ENCODE measurements at regions of chr19 and their contacts with region 1.

Region 1: GRCh38 chr19:6737284-6738046 is at the start of gene GPR108:
- DNase-seq: peak; percentile 100
- ATAC-seq: peak; percentile 73
- H3K4me3 Mint-ChIP-seq: peak within 1 kb of the TSS; percentile 97
- H3K27ac Mint-ChIP-seq: peak within 1 kb of the TSS; percentile 97
- H3K4me1 Mint-ChIP-seq: peaks cover 45% of the 10 kb centered on the region
- H3K27me3 Mint-ChIP-seq: no peaks in the 10 kb centered on the region
- CTCF ChIP-seq: no peak
- total RNA-seq, gene GPR108: 48.7 to 59.5 TPM (median 54.2 TPM) in 3 replicates

Region 2: DNA sequence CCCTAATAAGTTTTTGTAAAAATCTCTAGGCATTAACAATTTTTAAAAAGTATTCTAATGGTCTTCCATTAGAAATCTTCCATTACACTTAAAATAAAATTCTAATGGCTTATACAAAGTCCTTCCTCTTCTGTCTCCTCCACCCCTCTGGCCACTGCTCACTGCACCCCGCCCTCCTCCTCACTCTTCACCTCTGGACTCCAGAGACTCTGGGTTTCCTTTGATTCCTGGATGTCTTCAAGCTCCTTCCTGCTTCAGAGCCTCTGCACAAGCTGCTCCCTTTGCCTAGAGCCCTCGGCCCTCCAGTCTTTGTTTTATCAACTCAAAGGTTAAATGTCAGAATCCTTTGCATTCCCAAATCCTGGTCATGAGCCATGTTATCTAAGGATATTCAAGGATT is 88.3 kb before region 1 on chr19:
- CTCF ChIA-PET with region 1: no interaction called
- POLR2A ChIA-PET with region 1: no interaction called
- DNase-seq: no peak
- ATAC-seq: no peak
- H3K4me3 Mint-ChIP-seq: no peak overlapping the region
- H3K27ac Mint-ChIP-seq: no peak overlapping the region
- H3K4me1 Mint-ChIP-seq: no peaks in the 10 kb centered on the region
- H3K27me3 Mint-ChIP-seq: peaks cover 9% of the 10 kb centered on the region
- CTCF ChIP-seq: no peak

Region 3: GRCh38 chr19:6723738-6724137 is 13.7 kb before region 1 on chr19:
- CTCF ChIA-PET with region 1: interaction called, 10 read pairs
- POLR2A ChIA-PET with region 1: interaction called, 3 read pairs
- DNase-seq: no peak
- ATAC-seq: no peak
- H3K4me3 Mint-ChIP-seq: no peak overlapping the region
- H3K27ac Mint-ChIP-seq: no peak overlapping the region
- H3K4me1 Mint-ChIP-seq: peaks cover 10% of the 10 kb centered on the region
- H3K27me3 Mint-ChIP-seq: no peaks in the 10 kb centered on the region
- CTCF ChIP-seq: no peak

Region 4: DNA sequence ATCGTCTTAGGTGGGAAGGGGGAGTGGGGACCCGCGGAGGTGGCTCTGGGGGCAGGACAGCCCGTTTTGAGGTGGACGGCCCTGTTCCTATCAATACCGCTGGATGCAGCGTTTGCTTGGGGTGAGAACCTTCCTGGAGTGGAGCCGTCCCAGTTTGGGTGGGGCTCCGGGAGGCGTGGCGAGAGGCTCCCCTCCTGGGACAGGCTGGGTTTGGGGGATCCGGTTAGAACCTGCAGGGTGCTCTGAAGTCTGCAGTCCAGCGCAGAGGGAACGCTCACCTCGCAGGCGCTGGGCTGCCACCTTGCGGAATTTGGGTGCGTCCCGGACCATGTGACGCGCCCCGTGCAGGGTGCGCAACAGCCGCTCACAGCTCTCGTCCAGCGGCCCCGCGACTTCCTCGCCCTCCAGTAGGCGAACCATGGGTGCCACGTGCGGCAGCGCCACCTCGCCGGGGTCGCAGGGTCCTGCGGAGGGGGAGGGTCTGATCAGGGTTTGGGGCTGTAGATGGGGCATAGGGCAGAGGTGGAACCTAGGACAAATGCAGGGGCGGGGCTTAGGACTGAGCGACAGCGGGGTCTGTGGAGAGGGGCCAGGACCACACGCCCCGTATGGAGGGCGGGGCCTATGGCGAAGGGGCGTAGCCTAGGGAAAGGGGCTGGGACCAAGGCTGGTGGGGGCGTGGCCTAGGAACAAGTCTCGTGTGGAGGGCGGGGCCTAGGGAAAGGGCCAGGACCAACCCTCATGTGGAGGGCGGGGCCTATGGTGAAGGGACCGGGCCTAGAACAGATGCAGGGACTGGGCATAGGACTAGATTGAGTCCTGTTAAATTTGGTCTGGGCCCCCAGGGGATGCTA is 15.9 kb after region 1 on chr19:
- CTCF ChIA-PET with region 1: interaction called, 31 read pairs
- POLR2A ChIA-PET with region 1: interaction called, 29 read pairs
- DNase-seq: peak; percentile 99
- ATAC-seq: peak; percentile 93
- H3K4me3 Mint-ChIP-seq: peak overlapping the region; percentile 80
- H3K27ac Mint-ChIP-seq: peak overlapping the region; percentile 98
- H3K4me1 Mint-ChIP-seq: peaks cover 5% of the 10 kb centered on the region; the same call in 1 of the 2 replicates
- H3K27me3 Mint-ChIP-seq: no peaks in the 10 kb centered on the region
- CTCF ChIP-seq: no peak

Region 5: GRCh38 chr19:6767357-6768235 is 30.1 kb after region 1 on chr19 and contains the start of gene SH2D3A:
- CTCF ChIA-PET with region 1: interaction called, 36 read pairs
- POLR2A ChIA-PET with region 1: interaction called, 19 read pairs
- DNase-seq: peak; percentile 97
- ATAC-seq: peak; percentile 83
- H3K4me3 Mint-ChIP-seq: peak within 1 kb of the TSS; percentile 89
- H3K27ac Mint-ChIP-seq: peak within 1 kb of the TSS; percentile 100
- H3K4me1 Mint-ChIP-seq: peaks cover 20% of the 10 kb centered on the region
- H3K27me3 Mint-ChIP-seq: no peaks in the 10 kb centered on the region; the same call in 1 of the 2 replicates
- CTCF ChIP-seq: no peak
- total RNA-seq, gene SH2D3A: 25.1 to 30.3 TPM (median 26.7 TPM) in 3 replicates

Region 6: DNA sequence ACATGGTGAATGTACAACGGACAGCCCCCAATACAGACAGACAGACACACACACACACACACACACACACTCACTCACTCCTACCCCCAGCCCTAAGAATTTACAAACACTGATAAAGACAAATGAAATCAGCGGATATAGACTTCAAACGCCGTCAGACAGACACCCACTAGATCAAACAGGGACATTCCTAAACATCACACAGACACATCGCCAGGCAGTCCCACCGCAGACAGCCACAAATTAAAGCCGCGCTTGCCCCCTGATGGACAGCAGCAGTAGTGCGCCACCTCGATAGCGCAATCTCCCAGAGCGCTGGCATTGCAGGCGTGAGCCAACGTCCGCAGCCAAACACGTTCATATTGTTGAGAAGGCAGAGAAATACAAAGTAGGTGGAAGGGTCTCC is 125.2 kb after region 1 on chr19:
- CTCF ChIA-PET with region 1: interaction called, 85 read pairs
- POLR2A ChIA-PET with region 1: no interaction called
- DNase-seq: peak; percentile 89
- ATAC-seq: peak; percentile 90
- H3K4me3 Mint-ChIP-seq: peak overlapping the region; percentile 65
- H3K27ac Mint-ChIP-seq: no peak overlapping the region
- H3K4me1 Mint-ChIP-seq: peaks cover 4% of the 10 kb centered on the region
- H3K27me3 Mint-ChIP-seq: peaks cover 3% of the 10 kb centered on the region; the same call in 1 of the 2 replicates
- CTCF ChIP-seq: peak; percentile 82

Measured in WTC11 (cell line).